ENCODE measurements at regions of chr16 and their contacts with region 1.

Region 1: GRCh38 chr16:65671-66137 is 6.7 kb downstream of the RHBDF1 start:
- DNase-seq: peak; percentile 71 to 85 (median 77)
- H3K4me3 ChIP-seq: no peak overlapping the region
- H3K4me3 Mint-ChIP-seq: no peak overlapping the region
- H3K27ac ChIP-seq: no peak overlapping the region
- H3K27ac Mint-ChIP-seq: no peak overlapping the region
- H3K4me1 ChIP-seq: no peaks in the 10 kb centered on the region
- H3K4me1 Mint-ChIP-seq: peaks cover 0 to 4% (median 0%) of the 10 kb centered on the region in 3 donors
- H3K27me3 ChIP-seq: no peaks in the 10 kb centered on the region
- H3K27me3 Mint-ChIP-seq: peaks cover 4 to 10% of the 10 kb centered on the region in 2 donors

Region 2: GRCh38 chr16:9903-10665 is 55.6 kb before region 1 on chr16:
- CTCF ChIA-PET with region 1: no interaction called
- POLR2A ChIA-PET with region 1: no interaction called
- DNase-seq: peak in 1 of 5 donors; percentile 11
- H3K4me3 ChIP-seq: no peak overlapping the region
- H3K4me3 Mint-ChIP-seq: peak overlapping the region; percentile 24 to 84 (median 71)
- H3K27ac ChIP-seq: no peak overlapping the region
- H3K27ac Mint-ChIP-seq: peak overlapping the region in 3 of 8 donors; percentile 54 to 66 (median 56)
- H3K4me1 ChIP-seq: no peaks in the 10 kb centered on the region
- H3K4me1 Mint-ChIP-seq: no peaks in the 10 kb centered on the region
- H3K27me3 ChIP-seq: no peaks in the 10 kb centered on the region
- H3K27me3 Mint-ChIP-seq: no peaks in the 10 kb centered on the region

Region 3: DNA sequence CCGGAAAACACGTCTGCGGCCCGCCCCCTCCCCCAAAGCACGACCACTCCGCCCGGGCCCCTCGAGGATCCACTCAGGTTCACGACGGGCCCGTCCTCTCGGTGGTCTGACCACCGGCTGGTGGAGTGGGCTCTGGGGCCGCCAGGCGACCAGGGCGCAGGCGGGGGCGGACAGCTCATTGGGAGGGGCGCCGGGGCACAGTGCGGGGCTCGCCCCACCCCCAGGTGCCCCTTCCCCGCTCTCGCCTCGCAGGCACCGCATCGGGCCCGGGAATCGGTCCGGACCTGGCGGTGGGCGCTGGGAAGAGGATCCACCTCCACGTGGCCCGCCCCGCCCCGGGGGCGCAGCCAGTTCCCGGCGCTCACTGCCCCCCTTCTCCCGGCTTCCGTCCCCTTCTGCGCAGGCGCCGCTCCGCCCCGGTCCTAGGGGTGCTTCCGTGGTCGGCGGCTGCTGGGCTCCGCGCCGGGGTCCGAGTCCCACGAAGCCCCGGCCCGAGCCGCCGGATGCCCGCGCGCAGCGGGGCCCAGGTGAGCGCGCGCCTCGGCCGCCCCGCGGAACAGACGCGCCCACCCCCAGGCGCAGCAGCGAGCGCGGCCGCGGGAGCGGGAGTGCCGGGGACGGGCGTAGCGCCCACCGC is 12.2 kb after region 1 on chr16 and contains the start of gene MPG:
- CTCF ChIA-PET with region 1: interaction called, 13 read pairs
- POLR2A ChIA-PET with region 1: no interaction called
- DNase-seq: peak; percentile 71 to 88 (median 78)
- H3K4me3 ChIP-seq: peak within 1 kb of the TSS; percentile 85
- H3K4me3 Mint-ChIP-seq: peak within 1 kb of the TSS; percentile 87 to 93 (median 90)
- H3K27ac ChIP-seq: peak within 1 kb of the TSS; percentile 65
- H3K27ac Mint-ChIP-seq: peak within 1 kb of the TSS; percentile 67 to 95 (median 83)
- H3K4me1 ChIP-seq: peaks cover 22% of the 10 kb centered on the region
- H3K4me1 Mint-ChIP-seq: peaks cover 21 to 43% (median 26%) of the 10 kb centered on the region in 3 donors
- H3K27me3 ChIP-seq: peaks cover 14% of the 10 kb centered on the region
- H3K27me3 Mint-ChIP-seq: peaks cover 13 to 15% of the 10 kb centered on the region in 2 donors
- total RNA-seq, gene MPG: 47.5 to 48.2 TPM

Region 4: DNA sequence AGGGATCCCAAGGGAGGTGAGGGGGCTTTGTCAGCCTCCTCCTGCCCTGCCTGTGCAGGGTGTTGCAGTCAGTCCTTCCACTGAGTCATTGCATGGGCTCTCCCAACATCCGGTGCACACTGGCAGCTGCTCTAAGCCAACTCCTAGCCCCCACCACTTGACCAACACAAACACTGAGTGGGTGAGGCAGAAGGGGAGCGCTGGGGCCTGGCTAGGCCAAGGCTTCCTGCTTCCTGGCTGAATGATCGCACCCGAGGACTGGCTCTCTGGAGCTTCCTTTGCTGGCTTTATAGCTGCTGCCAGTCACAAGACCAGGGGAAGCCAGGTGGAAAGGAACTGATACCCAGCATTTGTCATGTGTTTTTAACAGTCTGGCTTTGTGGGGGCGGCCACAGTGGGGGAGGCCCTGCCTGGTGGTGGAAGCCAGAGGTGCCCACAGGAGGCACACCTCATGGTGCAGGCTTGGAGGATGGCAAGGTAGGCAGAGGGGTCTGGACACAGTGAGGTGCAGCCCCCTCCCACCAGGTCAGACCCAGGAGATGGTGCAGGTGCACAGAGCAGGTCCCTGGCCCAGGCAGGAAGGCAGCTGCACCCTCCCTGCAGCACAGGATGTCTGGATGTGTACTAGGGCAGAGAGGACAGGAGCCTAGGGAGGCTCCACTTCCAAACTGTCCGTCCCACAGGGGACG is 19.2 kb after region 1 on chr16:
- CTCF ChIA-PET with region 1: interaction called, 21 read pairs
- POLR2A ChIA-PET with region 1: interaction called, 3 read pairs
- DNase-seq: peak in 3 of 5 donors; percentile 17 to 58 (median 19)
- H3K4me3 ChIP-seq: no peak overlapping the region
- H3K4me3 Mint-ChIP-seq: peak overlapping the region in 6 of 7 donors; percentile 12 to 69 (median 48)
- H3K27ac ChIP-seq: no peak overlapping the region
- H3K27ac Mint-ChIP-seq: peak overlapping the region in 7 of 8 donors; percentile 2 to 92 (median 78)
- H3K4me1 ChIP-seq: peaks cover 19% of the 10 kb centered on the region
- H3K4me1 Mint-ChIP-seq: peaks cover 24 to 32% (median 24%) of the 10 kb centered on the region in 3 donors
- H3K27me3 ChIP-seq: no peaks in the 10 kb centered on the region
- H3K27me3 Mint-ChIP-seq: peaks cover 0 to 1% of the 10 kb centered on the region in 2 donors

Region 5: GRCh38 chr16:96935-97381 is 31.3 kb after region 1 on chr16:
- CTCF ChIA-PET with region 1: interaction called, 201 read pairs
- POLR2A ChIA-PET with region 1: interaction called, 5 read pairs
- DNase-seq: peak; percentile 85 to 91 (median 87)
- H3K4me3 ChIP-seq: no peak overlapping the region
- H3K4me3 Mint-ChIP-seq: no peak overlapping the region
- H3K27ac ChIP-seq: no peak overlapping the region
- H3K27ac Mint-ChIP-seq: peak overlapping the region in 2 of 8 donors; percentile 7 to 43
- H3K4me1 ChIP-seq: no peaks in the 10 kb centered on the region
- H3K4me1 Mint-ChIP-seq: peaks cover 3 to 11% (median 7%) of the 10 kb centered on the region in 3 donors
- H3K27me3 ChIP-seq: no peaks in the 10 kb centered on the region
- H3K27me3 Mint-ChIP-seq: peaks cover 0 to 4% of the 10 kb centered on the region in 2 donors

Region 6: GRCh38 chr16:106623-107324 is 41.1 kb after region 1 on chr16:
- CTCF ChIA-PET with region 1: interaction called, 39 read pairs
- POLR2A ChIA-PET with region 1: interaction called, 6 read pairs
- DNase-seq: peak; percentile 33 to 70 (median 57)
- H3K4me3 ChIP-seq: no peak overlapping the region
- H3K4me3 Mint-ChIP-seq: no peak overlapping the region
- H3K27ac ChIP-seq: no peak overlapping the region
- H3K27ac Mint-ChIP-seq: no peak overlapping the region
- H3K4me1 ChIP-seq: no peaks in the 10 kb centered on the region
- H3K4me1 Mint-ChIP-seq: peaks cover 4 to 5% (median 5%) of the 10 kb centered on the region in 3 donors
- H3K27me3 ChIP-seq: no peaks in the 10 kb centered on the region
- H3K27me3 Mint-ChIP-seq: no peaks in the 10 kb centered on the region

Region 7: GRCh38 chr16:180938-181667 is 115.4 kb after region 1 on chr16:
- CTCF ChIA-PET with region 1: interaction called, 16 read pairs
- POLR2A ChIA-PET with region 1: no interaction called
- DNase-seq: peak; percentile 78 to 87 (median 80)
- H3K4me3 ChIP-seq: peak overlapping the region; percentile 45
- H3K4me3 Mint-ChIP-seq: peak overlapping the region in 2 of 7 donors; percentile 56 to 65
- H3K27ac ChIP-seq: no peak overlapping the region
- H3K27ac Mint-ChIP-seq: no peak overlapping the region
- H3K4me1 ChIP-seq: peaks cover 9% of the 10 kb centered on the region
- H3K4me1 Mint-ChIP-seq: peaks cover 0 to 14% (median 2%) of the 10 kb centered on the region in 3 donors
- H3K27me3 ChIP-seq: peaks cover 23% of the 10 kb centered on the region
- H3K27me3 Mint-ChIP-seq: peaks cover 18 to 25% of the 10 kb centered on the region in 2 donors

Measured in CD8-positive, alpha-beta memory T cell (primary cell).